Sigmoid colon (tissue), 7 donors: ENCODE measurements at regions of chr10 and their contacts with region 1.

Region 1: DNA sequence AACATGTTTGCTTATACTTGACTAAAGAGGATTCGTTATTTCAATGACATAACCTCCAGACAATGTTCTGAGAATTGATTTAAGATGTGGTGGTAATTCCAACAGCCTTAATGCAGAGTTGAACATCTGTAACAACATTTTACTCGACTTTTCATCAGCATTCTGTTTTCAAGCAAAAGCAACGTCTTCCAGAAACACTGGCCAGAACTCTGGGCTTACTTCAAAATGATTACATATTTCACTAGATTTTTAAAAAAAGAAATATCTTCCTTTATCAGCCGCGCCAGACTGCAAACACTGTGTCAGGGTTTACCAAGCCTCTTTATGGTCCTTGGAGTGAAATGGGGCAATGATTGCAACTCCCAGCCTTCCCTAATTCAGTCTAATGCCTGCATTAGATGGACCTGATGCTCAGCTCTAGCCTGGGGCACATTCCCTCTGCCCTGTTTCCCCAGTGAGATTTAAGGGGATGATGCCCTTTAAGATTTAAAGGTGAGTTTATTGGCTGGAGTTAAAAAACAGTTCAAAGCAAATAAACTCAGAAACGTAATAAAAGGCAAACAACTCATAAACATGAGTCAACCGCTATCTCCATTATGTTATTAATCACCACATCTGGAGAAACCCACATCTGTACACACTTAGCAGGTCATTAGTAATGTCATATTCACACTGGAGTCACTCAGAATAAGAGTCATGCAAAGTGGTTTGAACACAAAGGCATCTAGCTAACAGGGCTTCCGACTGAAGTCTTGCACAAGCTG is 663.9 kb downstream of the KCNMA1 start:
- DNase-seq: peak; percentile 77
- H3K4me3 ChIP-seq: no peak overlapping the region
- H3K27ac ChIP-seq: peak overlapping the region in 3 of 4 donors; percentile 70 to 76 (median 72)
- H3K4me1 ChIP-seq: peaks cover 0 to 89% (median 78%) of the 10 kb centered on the region in 4 donors
- H3K27me3 ChIP-seq: no peaks in the 10 kb centered on the region
- CTCF ChIP-seq: no peak
- EP300 ChIP-seq: peak in 2 of 4 donors; percentile 8 to 14
- POLR2A ChIP-seq: no peak

Region 2: DNA sequence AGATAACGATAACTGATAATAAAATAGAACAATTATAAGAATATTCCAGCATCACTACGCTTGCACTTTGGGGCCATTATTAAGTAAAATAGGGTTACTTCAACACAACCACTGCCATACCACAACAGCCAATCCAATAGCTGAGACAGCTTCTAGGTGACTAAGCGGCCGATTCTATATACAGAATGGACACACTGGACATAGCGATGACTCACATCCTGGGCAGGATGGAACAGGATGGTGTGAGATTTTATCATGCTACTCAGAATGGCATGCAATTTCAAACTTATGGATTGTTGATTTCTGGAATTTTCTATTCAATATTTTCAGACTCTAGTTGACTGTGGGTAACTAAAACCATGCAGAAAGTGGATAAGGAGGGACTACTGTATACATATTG is 621.4 kb before region 1 on chr10:
- intact Hi-C with region 1: loop called (anchors 5 kb)
- DNase-seq: no peak
- H3K4me3 ChIP-seq: no peak overlapping the region
- H3K27ac ChIP-seq: peak overlapping the region in 3 of 4 donors; percentile 51 to 69 (median 57)
- H3K4me1 ChIP-seq: peaks cover 0 to 53% (median 26%) of the 10 kb centered on the region in 4 donors
- H3K27me3 ChIP-seq: no peaks in the 10 kb centered on the region
- CTCF ChIP-seq: no peak
- EP300 ChIP-seq: no peak
- POLR2A ChIP-seq: no peak

Region 3: GRCh38 chr10:76456190-76456589 is 517.5 kb before region 1 on chr10:
- intact Hi-C with region 1: loop called (anchors 2 kb)
- DNase-seq: no peak
- H3K4me3 ChIP-seq: no peak overlapping the region
- H3K27ac ChIP-seq: peak overlapping the region in 2 of 4 donors; percentile 20 to 53
- H3K4me1 ChIP-seq: peaks cover 0 to 44% (median 38%) of the 10 kb centered on the region in 4 donors
- H3K27me3 ChIP-seq: no peaks in the 10 kb centered on the region
- CTCF ChIP-seq: no peak
- EP300 ChIP-seq: no peak
- POLR2A ChIP-seq: no peak

Region 4: DNA sequence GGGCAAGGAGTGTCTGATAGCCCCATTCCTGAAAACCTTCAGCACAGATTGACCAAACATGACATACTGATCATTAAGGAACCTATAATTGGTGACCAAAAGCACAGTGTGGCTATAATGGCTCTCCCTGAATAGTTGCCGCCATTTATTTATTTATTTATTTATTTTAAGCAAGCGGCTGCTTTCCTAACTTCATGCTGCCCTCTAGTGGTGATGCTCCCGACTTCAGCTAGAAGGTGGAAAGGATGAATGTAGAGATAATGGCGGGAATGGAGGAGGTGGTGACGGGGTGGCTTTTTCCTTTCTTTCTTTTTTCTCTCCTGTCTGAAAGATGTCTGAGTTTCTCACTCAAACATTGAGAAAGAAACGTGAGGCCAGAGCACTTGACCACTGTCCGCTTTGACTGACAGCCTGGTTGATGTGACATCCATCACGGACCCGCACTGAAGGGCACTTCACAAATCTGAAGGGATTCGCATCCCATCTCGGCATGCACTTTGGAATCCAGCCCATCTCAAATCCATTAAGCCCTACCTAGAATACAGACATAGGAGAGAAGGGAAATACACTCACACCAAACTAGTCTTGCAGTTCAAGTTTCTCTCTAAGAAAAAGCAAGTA is 426.2 kb before region 1 on chr10:
- intact Hi-C with region 1: loop called (anchors 5 kb)
- DNase-seq: peak; percentile 89
- H3K4me3 ChIP-seq: no peak overlapping the region
- H3K27ac ChIP-seq: no peak overlapping the region
- H3K4me1 ChIP-seq: peaks cover 0 to 78% (median 55%) of the 10 kb centered on the region in 4 donors
- H3K27me3 ChIP-seq: no peaks in the 10 kb centered on the region
- CTCF ChIP-seq: peak; percentile 67 to 84 (median 76)
- EP300 ChIP-seq: no peak
- POLR2A ChIP-seq: no peak

Region 5: GRCh38 chr10:76778914-76779795 is 194.5 kb before region 1 on chr10:
- intact Hi-C with region 1: loop called (anchors 5 kb)
- DNase-seq: no peak
- H3K4me3 ChIP-seq: no peak overlapping the region
- H3K27ac ChIP-seq: peak overlapping the region in 3 of 4 donors; percentile 59 to 77 (median 72)
- H3K4me1 ChIP-seq: peaks cover 0 to 55% (median 30%) of the 10 kb centered on the region in 4 donors
- H3K27me3 ChIP-seq: no peaks in the 10 kb centered on the region
- CTCF ChIP-seq: peak in 2 of 4 experiments; percentile 9 to 32
- EP300 ChIP-seq: no peak
- POLR2A ChIP-seq: no peak

Region 6: GRCh38 chr10:77111611-77112550 is 138.2 kb after region 1 on chr10:
- intact Hi-C with region 1: no loop called
- DNase-seq: no peak
- H3K4me3 ChIP-seq: no peak overlapping the region
- H3K27ac ChIP-seq: peak overlapping the region in 1 of 4 donors; percentile 23
- H3K4me1 ChIP-seq: peaks cover 0 to 26% (median 19%) of the 10 kb centered on the region in 4 donors
- H3K27me3 ChIP-seq: no peaks in the 10 kb centered on the region
- CTCF ChIP-seq: peak; percentile 65 to 82 (median 78)
- EP300 ChIP-seq: no peak
- POLR2A ChIP-seq: no peak

Region 7: DNA sequence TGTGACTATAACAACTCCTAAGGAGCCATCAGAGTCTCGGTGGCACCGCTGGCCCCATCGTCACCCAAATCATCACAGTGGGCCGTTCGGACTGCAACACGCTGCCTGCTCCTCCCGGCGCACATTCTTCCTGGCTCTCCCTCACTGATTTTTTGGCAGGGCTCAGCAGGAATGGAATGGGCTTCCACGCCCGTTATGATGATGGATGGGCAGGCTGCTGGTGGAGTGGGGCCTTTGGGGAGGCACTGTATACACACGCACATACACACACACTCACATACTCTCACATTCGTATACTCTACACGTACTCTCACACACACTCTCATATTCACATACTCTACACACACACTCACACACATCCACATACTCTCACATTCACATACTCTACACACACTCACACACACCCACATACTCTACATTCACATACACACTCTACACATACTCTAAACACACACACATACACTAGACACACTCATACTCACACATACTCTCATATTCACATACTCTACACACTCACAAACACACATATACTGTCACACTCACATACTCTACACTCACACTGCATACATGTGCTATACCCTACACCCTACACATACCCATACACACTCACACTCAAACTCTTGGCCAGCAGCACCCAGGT is 564.1 kb after region 1 on chr10:
- intact Hi-C with region 1: no loop called
- DNase-seq: peak; percentile 80
- H3K4me3 ChIP-seq: no peak overlapping the region
- H3K27ac ChIP-seq: peak overlapping the region; percentile 55 to 75 (median 64)
- H3K4me1 ChIP-seq: peaks cover 0 to 77% (median 54%) of the 10 kb centered on the region in 4 donors
- H3K27me3 ChIP-seq: no peaks in the 10 kb centered on the region
- CTCF ChIP-seq: no peak
- EP300 ChIP-seq: no peak
- POLR2A ChIP-seq: no peak